Activated naive CD4-positive, alpha-beta T cell treated with anti-CD3 and anti-CD28 coated beads for 36 hours (primary cell): ENCODE measurements at regions of chr3 and their contacts with region 1.

Region 1: DNA sequence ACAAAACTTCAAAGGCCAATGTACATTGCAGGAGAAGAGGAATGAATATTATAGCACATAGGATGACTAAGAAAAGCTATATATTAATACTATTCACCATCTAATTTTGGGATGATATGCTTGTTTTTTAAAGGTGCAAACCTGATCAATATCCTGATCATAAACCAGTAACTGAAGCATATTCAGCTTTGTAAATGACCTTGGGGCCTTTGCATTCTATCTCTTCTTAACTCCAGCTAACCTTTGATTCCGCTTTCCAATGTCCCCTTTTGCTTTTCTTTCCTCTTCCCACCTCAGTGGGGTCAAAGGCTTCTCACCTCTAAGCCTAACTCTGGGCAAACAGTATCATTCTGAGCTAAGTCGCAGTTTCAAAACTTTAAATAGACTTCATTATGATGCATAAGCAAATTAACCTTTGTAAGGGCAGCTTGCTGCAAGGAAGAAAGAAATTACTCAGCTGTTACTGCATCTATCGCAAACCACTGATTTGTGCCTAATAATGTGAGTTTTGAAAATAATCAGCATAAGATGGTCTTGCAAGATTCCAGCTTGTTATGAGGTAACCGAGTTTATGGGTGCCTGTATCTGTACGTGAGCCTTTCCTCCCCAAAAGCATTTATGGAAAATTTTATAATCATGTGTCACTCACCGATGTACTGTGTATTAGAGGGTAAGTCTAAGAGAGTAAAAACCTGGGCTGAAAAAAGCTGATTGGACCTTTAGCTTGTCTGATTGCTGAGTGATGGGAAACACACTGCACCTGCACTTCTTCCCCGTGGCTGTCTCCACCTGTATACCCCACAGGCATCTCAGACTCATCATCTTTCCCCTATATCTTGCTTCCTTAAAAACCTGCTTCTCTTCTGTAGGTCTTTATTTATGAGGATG is 116.8 kb downstream of the TPRG1 start:
- DNase-seq: no peak
- H3K4me3 Mint-ChIP-seq: no peak overlapping the region
- H3K27ac Mint-ChIP-seq: peak overlapping the region; percentile 46
- H3K4me1 Mint-ChIP-seq: peaks cover 34% of the 10 kb centered on the region
- H3K27me3 Mint-ChIP-seq: no peaks in the 10 kb centered on the region

Region 2: DNA sequence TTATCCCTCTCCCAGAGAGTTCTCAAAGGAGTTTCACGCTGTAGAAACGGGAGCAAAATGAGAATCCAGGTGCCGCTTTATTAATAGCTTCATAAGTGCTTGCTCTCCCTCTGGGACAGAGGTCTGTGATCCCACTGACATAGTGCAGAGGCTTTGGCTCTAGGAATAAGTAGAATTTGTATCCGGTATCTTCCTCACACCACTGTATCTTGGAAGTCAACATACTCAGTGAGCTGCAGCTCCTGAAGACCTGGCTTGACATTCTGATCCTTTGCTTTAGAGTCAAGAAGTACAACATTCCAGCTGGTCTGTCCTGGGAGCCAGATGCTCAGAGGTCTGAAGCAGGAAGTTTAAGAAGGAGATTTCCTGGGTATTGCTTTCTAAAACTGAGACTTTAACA is 811.7 kb before region 1 on chr3:
- CTCF ChIA-PET with region 1: no interaction called
- intact Hi-C with region 1: no loop called
- DNase-seq: no peak
- H3K4me3 Mint-ChIP-seq: no peak overlapping the region
- H3K27ac Mint-ChIP-seq: no peak overlapping the region
- H3K4me1 Mint-ChIP-seq: peaks cover 4% of the 10 kb centered on the region
- H3K27me3 Mint-ChIP-seq: no peaks in the 10 kb centered on the region

Region 3: DNA sequence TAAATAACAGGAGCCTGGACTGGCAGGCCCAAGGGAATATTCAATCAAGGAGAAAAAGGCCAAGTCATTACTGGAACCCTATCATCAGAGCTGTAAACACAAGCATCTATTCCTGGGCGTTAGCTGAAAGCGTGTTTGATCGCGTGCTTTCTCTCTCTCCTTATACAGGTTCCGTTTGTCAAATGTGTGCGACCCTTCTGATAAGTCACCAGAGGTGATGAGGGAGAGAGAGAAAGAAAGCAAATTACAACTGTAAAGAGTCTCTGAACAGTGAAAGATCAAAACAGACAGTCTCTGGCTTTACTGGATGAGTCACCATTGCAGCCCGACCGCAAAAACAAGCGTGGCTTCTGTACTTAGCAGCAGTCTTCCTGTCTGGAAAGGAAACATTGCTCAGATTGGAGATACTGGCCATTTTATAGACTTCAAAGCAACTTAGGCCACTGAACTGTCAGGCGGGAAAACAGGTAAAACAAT is 156.3 kb before region 1 on chr3:
- CTCF ChIA-PET with region 1: no interaction called
- intact Hi-C with region 1: loop called (anchors 1 kb)
- DNase-seq: peak; percentile 91
- H3K4me3 Mint-ChIP-seq: peak overlapping the region; percentile 41
- H3K27ac Mint-ChIP-seq: peak overlapping the region; percentile 76
- H3K4me1 Mint-ChIP-seq: peaks cover 21% of the 10 kb centered on the region
- H3K27me3 Mint-ChIP-seq: no peaks in the 10 kb centered on the region

Region 4: GRCh38 chr3:189276481-189277219 is 11.9 kb before region 1 on chr3:
- CTCF ChIA-PET with region 1: interaction called, 6 read pairs
- intact Hi-C with region 1: loop called (anchors 1 kb)
- DNase-seq: no peak
- H3K4me3 Mint-ChIP-seq: no peak overlapping the region
- H3K27ac Mint-ChIP-seq: no peak overlapping the region
- H3K4me1 Mint-ChIP-seq: peaks cover 35% of the 10 kb centered on the region
- H3K27me3 Mint-ChIP-seq: no peaks in the 10 kb centered on the region

Region 5: GRCh38 chr3:189517981-189518380 is 229.4 kb after region 1 on chr3:
- CTCF ChIA-PET with region 1: no interaction called
- intact Hi-C with region 1: no loop called
- DNase-seq: no peak
- H3K4me3 Mint-ChIP-seq: no peak overlapping the region
- H3K27ac Mint-ChIP-seq: no peak overlapping the region
- H3K4me1 Mint-ChIP-seq: peaks cover 7% of the 10 kb centered on the region
- H3K27me3 Mint-ChIP-seq: no peaks in the 10 kb centered on the region